ENCODE measurements at regions of chr4 and their contacts with region 1.

Region 1: DNA sequence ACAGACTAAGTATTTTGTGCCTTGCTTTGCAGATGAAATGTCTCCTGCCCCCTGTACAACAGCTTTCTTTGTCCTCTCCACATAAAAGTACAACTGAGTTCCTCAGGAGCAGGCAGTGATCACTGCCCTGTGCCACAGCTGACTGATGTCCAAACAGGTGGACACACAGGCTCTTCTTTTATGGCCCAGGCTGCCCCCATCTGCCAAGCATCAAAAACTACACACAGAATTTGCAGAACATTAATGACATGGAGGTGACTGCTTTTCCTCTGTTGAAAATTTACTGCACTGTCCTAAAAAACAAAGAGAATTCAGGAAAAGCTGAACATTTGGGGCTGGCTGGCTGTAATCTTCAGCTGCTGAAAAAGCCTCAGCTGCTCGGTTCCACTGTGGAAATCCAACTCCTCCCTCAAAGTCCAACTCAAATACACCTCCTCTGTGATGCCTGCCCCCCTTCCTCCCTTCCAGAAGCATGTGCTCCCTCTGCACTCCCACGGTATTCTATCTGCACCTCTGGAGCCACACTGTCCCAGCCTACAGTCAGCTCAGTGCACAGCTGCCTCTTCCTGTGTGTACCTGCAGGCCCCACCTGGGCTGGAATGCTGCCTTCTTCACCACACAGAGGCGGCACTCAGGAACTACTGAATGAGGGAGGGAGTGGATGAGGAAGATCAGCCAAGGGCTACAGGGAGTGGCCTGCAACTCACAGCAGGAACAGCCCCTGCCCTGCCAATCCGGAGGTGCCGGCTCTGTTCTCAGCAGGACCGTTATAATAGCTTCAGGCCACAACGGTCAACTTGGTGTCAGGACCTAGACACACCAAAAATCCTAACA is 10.3 kb downstream of the AFAP1 start:
- DNase-seq: peak; percentile 84
- H3K4me3 Mint-ChIP-seq: no peak overlapping the region
- H3K27ac Mint-ChIP-seq: peak overlapping the region; percentile 39
- H3K4me1 Mint-ChIP-seq: peaks cover 29% of the 10 kb centered on the region
- H3K27me3 Mint-ChIP-seq: no peaks in the 10 kb centered on the region
- CTCF ChIP-seq: peak; percentile 43

Region 2: GRCh38 chr4:7811536-7812191 is 117.7 kb before region 1 on chr4:
- CTCF ChIA-PET with region 1: interaction called, 66 read pairs
- POLR2A ChIA-PET with region 1: interaction called, 3 read pairs
- intact Hi-C with region 1: loop called (anchors 1 kb)
- DNase-seq: no peak
- H3K4me3 Mint-ChIP-seq: no peak overlapping the region
- H3K27ac Mint-ChIP-seq: no peak overlapping the region
- H3K4me1 Mint-ChIP-seq: no peaks in the 10 kb centered on the region
- H3K27me3 Mint-ChIP-seq: no peaks in the 10 kb centered on the region
- CTCF ChIP-seq: no peak

Region 3: DNA sequence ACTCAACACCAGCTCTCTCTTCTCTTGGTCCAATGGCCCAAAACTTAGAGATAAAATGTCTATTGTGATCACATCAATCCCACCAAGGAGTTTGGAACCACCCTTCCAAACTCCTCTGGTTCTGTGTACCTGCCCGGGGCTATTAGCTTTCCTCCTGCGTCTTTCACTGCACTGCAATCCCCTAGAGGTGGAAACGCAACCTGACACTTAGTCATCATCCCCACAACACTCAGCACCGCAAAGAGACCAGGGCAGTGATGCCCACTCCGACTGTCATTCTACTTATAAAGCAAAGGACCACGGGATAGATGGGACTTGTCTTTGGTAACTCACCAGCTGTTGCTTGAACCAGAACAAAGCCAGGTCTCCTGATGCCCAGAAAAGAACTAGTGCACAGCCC is 11.7 kb before region 1 on chr4:
- CTCF ChIA-PET with region 1: interaction called, 17 read pairs
- POLR2A ChIA-PET with region 1: no interaction called
- intact Hi-C with region 1: no loop called
- DNase-seq: no peak
- H3K4me3 Mint-ChIP-seq: no peak overlapping the region
- H3K27ac Mint-ChIP-seq: peak overlapping the region; percentile 59
- H3K4me1 Mint-ChIP-seq: peaks cover 12% of the 10 kb centered on the region
- H3K27me3 Mint-ChIP-seq: no peaks in the 10 kb centered on the region
- CTCF ChIP-seq: no peak

Measured in MCF 10A (cell line).